ENCODE measurements at regions of chr15 and their contacts with region 1.

Region 1: GRCh38 chr15:66497502-66498455 is at the start of gene SNAPC5:
- DNase-seq: peak; percentile 97
- H3K4me3 ChIP-seq: peak within 1 kb of the TSS; percentile 95
- H3K27ac ChIP-seq: peak within 1 kb of the TSS; percentile 92
- H3K4me1 ChIP-seq: peaks cover 51% of the 10 kb centered on the region
- H3K27me3 ChIP-seq: no peaks in the 10 kb centered on the region
- CTCF ChIP-seq: peak; percentile 98
- total RNA-seq, gene SNAPC5: 40.9 TPM

Region 2: GRCh38 chr15:66386204-66387123 is 111.3 kb before region 1 on chr15 and contains the start of gene MAP2K1:
- intact Hi-C with region 1: loop called (anchors 5 kb)
- DNase-seq: peak; percentile 99
- H3K4me3 ChIP-seq: peak within 1 kb of the TSS; percentile 91
- H3K27ac ChIP-seq: peak within 1 kb of the TSS; percentile 93
- H3K4me1 ChIP-seq: peaks cover 38% of the 10 kb centered on the region
- H3K27me3 ChIP-seq: no peaks in the 10 kb centered on the region
- CTCF ChIP-seq: peak; percentile 81
- total RNA-seq, gene MAP2K1: 44.9 TPM

Region 3: DNA sequence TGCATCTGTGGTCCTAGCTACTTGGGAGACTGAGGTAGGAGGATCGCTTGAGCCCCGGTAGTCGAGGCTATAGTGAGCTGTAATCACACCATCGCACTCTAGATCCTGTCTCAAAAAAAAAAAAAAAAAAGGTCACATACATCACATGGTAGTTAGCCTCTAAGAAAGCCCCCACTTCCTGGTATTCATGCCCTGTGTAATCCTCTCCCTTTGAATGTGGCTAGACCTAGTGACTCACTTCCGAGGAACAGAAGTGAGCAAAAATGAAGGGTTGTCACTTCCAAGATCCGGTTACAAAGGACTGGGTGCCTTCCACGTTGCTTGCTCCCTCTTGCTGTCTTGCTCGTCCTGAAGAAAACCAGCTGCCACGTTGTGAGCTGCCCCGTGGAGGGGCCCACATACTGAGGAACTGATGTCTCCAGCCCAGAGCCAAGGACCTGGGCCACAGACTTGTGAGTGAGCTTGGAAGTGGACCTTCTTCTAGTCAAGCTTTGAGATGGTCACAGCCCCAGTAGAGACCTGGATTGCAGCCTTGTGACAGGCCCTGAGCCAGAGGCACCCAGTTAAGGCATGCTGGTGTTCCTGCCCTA is 80.6 kb after region 1 on chr15:
- intact Hi-C with region 1: no loop called
- DNase-seq: no peak
- H3K4me3 ChIP-seq: no peak overlapping the region
- H3K27ac ChIP-seq: peak overlapping the region; percentile 4
- H3K4me1 ChIP-seq: peaks cover 26% of the 10 kb centered on the region
- H3K27me3 ChIP-seq: no peaks in the 10 kb centered on the region
- CTCF ChIP-seq: no peak

Region 4: GRCh38 chr15:66646308-66646707 is 148.5 kb after region 1 on chr15:
- intact Hi-C with region 1: no loop called
- DNase-seq: no peak
- H3K4me3 ChIP-seq: no peak overlapping the region
- H3K27ac ChIP-seq: peak overlapping the region; percentile 80
- H3K4me1 ChIP-seq: peaks cover 70% of the 10 kb centered on the region
- H3K27me3 ChIP-seq: no peaks in the 10 kb centered on the region
- CTCF ChIP-seq: no peak

Region 5: GRCh38 chr15:66774001-66774814 is 276.4 kb after region 1 on chr15:
- intact Hi-C with region 1: no loop called
- DNase-seq: peak; percentile 85
- H3K4me3 ChIP-seq: no peak overlapping the region
- H3K27ac ChIP-seq: peak overlapping the region; percentile 75
- H3K4me1 ChIP-seq: peaks cover 89% of the 10 kb centered on the region
- H3K27me3 ChIP-seq: no peaks in the 10 kb centered on the region
- CTCF ChIP-seq: peak; percentile 98

Measured in left ventricle myocardium inferior (tissue), 1 donor.